Activated naive CD4-positive, alpha-beta T cell treated with anti-CD3 and anti-CD28 coated beads for 36 hours (primary cell): ENCODE measurements at regions of chr1 and their contacts with region 1.

Region 1: GRCh38 chr1:218351391-218352074 is 6.4 kb downstream of the TGFB2 start:
- DNase-seq: peak; percentile 35
- H3K4me3 Mint-ChIP-seq: peak overlapping the region; percentile 62
- H3K27ac Mint-ChIP-seq: no peak overlapping the region
- H3K4me1 Mint-ChIP-seq: peaks cover 28% of the 10 kb centered on the region
- H3K27me3 Mint-ChIP-seq: peaks cover 60% of the 10 kb centered on the region

Region 2: GRCh38 chr1:217407534-217408001 is 944.0 kb before region 1 on chr1:
- CTCF ChIA-PET with region 1: no interaction called
- intact Hi-C with region 1: no loop called
- DNase-seq: no peak
- H3K4me3 Mint-ChIP-seq: no peak overlapping the region
- H3K27ac Mint-ChIP-seq: no peak overlapping the region
- H3K4me1 Mint-ChIP-seq: no peaks in the 10 kb centered on the region
- H3K27me3 Mint-ChIP-seq: peaks cover 7% of the 10 kb centered on the region

Region 3: DNA sequence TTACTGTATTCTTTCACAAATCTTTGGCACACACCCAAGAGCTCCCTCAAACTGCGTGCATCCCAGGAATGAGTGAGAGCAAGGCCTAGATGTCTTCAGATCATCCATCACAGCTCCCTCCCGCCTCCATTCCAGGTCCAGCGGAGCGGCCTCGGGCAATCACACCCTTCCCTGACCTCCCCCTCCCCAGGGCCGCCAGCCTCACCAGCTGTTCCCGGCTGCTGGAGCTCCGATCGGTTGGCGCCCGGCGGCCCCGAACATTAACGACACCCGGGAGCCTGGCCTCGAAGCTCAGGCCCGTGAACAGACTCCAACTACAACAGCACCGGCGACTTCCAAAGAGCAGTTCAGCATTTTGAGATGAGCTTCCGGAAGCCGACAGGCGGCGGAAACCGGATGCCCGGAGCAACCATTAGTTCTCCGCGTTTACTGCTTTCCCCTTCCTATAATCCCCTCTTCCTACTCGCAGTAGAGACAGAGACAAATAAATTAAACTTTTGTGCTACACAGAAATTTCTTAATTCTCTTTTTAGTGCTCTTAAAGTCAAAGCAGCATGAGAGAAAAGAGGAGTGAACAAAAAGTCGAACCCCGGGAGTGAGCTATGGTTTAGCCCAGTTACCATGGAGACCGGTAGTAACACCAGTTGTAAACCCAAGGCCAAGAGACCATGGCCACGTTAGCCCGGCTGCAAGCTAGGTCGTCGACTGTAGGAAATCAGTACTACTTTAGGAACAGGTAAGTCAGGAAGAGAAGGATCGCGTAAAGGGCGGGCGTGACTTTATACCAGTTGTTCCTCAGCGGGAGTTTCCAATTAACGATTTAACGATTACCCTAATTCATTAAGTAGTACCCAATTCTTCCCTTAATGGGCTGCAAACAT is 720.6 kb before region 1 on chr1 and contains the starts of genes GPATCH2 and SPATA17:
- CTCF ChIA-PET with region 1: no interaction called
- intact Hi-C with region 1: loop called (anchors 5 kb)
- DNase-seq: peak; percentile 80
- H3K4me3 Mint-ChIP-seq: peak within 1 kb of the TSS; percentile 93
- H3K27ac Mint-ChIP-seq: peak within 1 kb of the TSS; percentile 99
- H3K4me1 Mint-ChIP-seq: peaks cover 31% of the 10 kb centered on the region
- H3K27me3 Mint-ChIP-seq: peaks cover 6% of the 10 kb centered on the region
- total RNA-seq, gene GPATCH2: 4.8 to 6.2 TPM
- total RNA-seq, gene SPATA17: not detected

Region 4: DNA sequence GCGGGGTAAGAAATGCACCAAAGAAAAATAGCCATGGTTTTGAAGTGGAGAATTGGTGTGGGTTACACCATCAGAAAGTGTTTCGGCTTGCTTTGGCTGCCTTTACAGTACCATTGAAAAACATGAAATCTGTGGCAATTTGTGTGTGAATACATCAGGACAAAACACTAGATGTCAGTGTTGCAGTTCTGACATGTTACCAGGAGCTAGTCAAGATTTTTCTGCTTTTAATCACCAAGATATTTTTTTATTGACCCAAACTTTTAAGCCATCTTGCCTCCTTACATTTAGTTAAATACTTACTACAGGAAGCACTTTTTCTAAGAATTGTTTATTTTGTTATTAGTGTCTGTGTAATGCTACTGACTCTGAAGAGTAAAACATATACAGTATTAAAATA is 52.1 kb before region 1 on chr1:
- CTCF ChIA-PET with region 1: no interaction called
- intact Hi-C with region 1: loop called (anchors 1 kb)
- DNase-seq: no peak
- H3K4me3 Mint-ChIP-seq: no peak overlapping the region
- H3K27ac Mint-ChIP-seq: no peak overlapping the region
- H3K4me1 Mint-ChIP-seq: peaks cover 27% of the 10 kb centered on the region
- H3K27me3 Mint-ChIP-seq: no peaks in the 10 kb centered on the region

Region 5: DNA sequence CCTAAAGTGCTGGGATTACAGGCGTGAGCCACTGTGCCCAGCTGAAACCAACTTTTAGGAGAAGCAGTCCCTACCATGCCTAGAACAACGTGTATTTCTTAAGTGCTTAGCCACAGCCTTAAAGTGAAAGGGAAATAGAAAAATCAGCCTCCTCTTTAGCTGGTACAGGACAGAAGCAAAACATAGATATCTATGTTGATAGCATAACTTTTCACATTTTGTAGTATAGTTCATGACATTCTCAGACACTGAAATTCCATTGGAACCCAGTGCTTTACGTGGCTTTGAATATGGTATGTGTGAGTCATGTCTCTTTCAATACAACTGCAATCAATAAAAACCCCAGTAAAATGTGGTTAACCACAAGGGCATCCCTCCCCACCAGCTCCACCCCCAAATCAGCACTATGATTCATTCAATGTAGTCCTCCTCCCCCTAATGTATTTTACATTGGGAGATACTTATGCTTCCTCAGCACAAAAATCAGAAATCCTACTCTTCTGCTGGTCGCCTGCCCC is 25.7 kb after region 1 on chr1:
- CTCF ChIA-PET with region 1: interaction called, 3 read pairs
- intact Hi-C with region 1: loop called (anchors 1 kb)
- DNase-seq: peak; percentile 84
- H3K4me3 Mint-ChIP-seq: no peak overlapping the region
- H3K27ac Mint-ChIP-seq: no peak overlapping the region
- H3K4me1 Mint-ChIP-seq: peaks cover 16% of the 10 kb centered on the region
- H3K27me3 Mint-ChIP-seq: peaks cover 61% of the 10 kb centered on the region

Region 6: DNA sequence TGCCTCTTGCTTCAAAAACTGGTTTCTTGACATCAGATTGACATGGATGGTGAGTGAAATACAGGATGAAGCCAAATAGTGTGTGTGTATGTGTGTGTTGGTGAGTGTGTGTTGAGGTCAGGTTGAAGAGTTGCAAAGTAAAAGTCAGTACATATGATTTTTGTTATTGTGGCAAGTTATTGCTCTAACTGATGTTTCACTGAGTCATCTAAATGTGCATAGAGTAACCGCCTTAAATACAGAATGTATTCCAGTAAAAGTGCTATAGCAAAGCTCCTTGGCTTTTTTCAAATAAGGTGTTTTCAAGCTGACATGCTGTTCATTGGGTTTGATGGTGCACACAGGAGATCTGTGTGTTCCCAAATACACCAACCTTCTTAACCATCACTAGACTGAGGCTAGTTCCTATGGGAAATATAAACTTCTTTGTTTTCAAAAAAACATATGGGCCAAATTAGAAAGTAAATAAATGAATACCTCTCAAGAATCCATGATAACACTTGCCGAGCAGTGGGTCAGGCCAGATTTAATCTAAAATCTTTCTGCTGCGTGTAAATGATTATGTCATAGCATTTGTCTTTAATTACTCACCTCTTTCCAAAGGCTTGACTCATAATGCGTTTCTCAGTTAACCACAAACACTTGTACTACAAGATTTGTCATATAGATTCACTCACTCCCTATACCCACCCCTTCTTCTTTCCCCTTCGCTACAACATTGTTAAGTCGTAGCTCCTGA is 973.3 kb after region 1 on chr1:
- CTCF ChIA-PET with region 1: no interaction called
- intact Hi-C with region 1: loop called (anchors 2 kb)
- DNase-seq: peak; percentile 30
- H3K4me3 Mint-ChIP-seq: no peak overlapping the region
- H3K27ac Mint-ChIP-seq: no peak overlapping the region
- H3K4me1 Mint-ChIP-seq: peaks cover 9% of the 10 kb centered on the region
- H3K27me3 Mint-ChIP-seq: peaks cover 4% of the 10 kb centered on the region